ENCODE measurements at regions of chr11 and their contacts with region 1.

Region 1: GRCh38 chr11:73995247-73995646 is 12.6 kb upstream of the UCP2 start:
- DNase-seq: no peak
- H3K4me3 Mint-ChIP-seq: peak overlapping the region; percentile 45
- H3K27ac Mint-ChIP-seq: peak overlapping the region; percentile 94
- H3K4me1 Mint-ChIP-seq: peaks cover 59% of the 10 kb centered on the region
- H3K27me3 Mint-ChIP-seq: no peaks in the 10 kb centered on the region

Region 2: GRCh38 chr11:73950869-73951710 is 44.2 kb before region 1 on chr11 and contains the start of gene DNAJB13:
- intact Hi-C with region 1: no loop called
- DNase-seq: no peak
- H3K4me3 Mint-ChIP-seq: no peak within 1 kb of the TSS
- H3K27ac Mint-ChIP-seq: no peak within 1 kb of the TSS
- H3K4me1 Mint-ChIP-seq: no peaks in the 10 kb centered on the region
- H3K27me3 Mint-ChIP-seq: no peaks in the 10 kb centered on the region
- total RNA-seq, gene DNAJB13: 0.29 and 0.64 TPM in 2 replicates

Region 3: GRCh38 chr11:74011360-74012073 is 16.3 kb after region 1 on chr11:
- intact Hi-C with region 1: loop called (anchors 1 kb)
- DNase-seq: peak; percentile 57
- H3K4me3 Mint-ChIP-seq: peak overlapping the region; percentile 55
- H3K27ac Mint-ChIP-seq: peak overlapping the region; percentile 99
- H3K4me1 Mint-ChIP-seq: peaks cover 91% of the 10 kb centered on the region
- H3K27me3 Mint-ChIP-seq: no peaks in the 10 kb centered on the region

Region 4: DNA sequence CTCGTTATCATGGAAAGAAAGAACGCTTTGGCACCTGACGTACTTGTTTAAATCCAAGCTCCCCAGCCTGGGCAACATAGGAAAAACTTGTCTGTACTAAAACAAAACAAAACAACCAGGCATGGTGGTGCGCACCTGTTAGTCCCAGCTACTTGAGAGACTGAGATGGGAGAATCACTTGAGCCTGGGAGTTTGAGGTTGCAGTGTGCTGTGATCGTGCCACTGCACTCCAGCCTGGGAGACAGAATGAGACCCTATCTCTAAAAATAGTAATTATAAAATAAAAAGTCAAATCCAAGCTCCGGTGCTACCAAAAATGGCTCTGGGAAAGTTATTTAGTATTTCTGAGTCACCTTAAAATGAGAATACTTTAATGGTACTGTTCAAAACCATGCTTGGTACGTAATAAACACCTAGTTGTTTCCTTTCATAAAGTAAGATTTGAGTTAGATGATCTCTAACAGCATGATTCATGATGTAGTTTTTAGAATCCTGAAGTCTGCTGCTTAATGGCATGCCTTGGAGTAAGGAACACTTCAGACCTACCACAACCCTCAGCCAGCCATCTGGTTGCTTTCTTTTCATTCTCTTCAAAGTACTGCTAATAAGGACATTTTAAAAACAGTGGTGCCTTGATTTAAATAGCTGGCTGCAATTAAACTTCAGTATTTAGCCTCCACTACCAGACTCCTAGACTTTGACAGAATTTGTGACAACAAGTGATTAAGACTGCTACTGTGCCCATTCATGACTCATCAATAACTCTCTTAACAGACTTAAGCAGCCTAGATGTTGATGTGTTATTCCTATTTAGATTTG is 184.2 kb after region 1 on chr11:
- intact Hi-C with region 1: no loop called
- DNase-seq: no peak
- H3K4me3 Mint-ChIP-seq: no peak overlapping the region
- H3K27ac Mint-ChIP-seq: no peak overlapping the region
- H3K4me1 Mint-ChIP-seq: peaks cover 2% of the 10 kb centered on the region
- H3K27me3 Mint-ChIP-seq: no peaks in the 10 kb centered on the region

Measured in activated T-helper 1 cell treated with anti-CD3 and anti-CD28 coated beads, Interleukin-12 subunit alpha, Interleukin-12 subunit beta, Interleukin-2, Interleukin-4 antibody, amounts not matched to agents 30 ng/mL and 10 ng/mL and 1 ng/mL, durations not matched to agents 14 hours and 24 hours and 36 hours (primary cell).